OCI-LY7 (cell line): ENCODE measurements at regions of chr13 and their contacts with region 1.

Region 1: GRCh38 chr13:92379371-92379770 is 847.2 kb upstream of the GPC6 start:
- DNase-seq: no peak
- H3K4me3 ChIP-seq: no peak overlapping the region
- H3K27ac ChIP-seq: no peak overlapping the region
- H3K4me1 ChIP-seq: no peaks in the 10 kb centered on the region
- CTCF ChIP-seq: no peak

Region 2: DNA sequence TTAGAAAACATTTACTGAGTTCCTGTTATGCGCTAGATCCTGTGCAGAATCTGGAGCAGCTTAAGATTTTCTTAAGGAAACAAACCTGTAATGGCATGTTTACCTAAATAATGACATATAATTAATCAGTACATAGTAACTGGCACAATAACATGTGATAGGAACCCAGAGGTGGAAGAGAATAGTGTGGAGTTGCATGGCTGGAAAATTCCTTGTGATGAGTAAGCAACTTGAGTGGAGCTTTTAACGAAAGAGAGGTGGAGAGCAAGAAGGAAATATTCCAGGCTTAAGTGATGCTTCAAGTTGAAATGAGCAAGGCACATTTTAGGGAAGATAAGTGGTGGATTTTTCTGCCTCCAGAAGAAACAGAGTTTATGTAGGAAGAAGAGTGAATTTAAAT is 990.2 kb before region 1 on chr13:
- CTCF ChIA-PET with region 1: no interaction called
- POLR2A ChIA-PET with region 1: no interaction called
- intact Hi-C with region 1: no loop called
- DNase-seq: no peak
- H3K4me3 ChIP-seq: no peak overlapping the region
- H3K27ac ChIP-seq: no peak overlapping the region
- H3K4me1 ChIP-seq: no peaks in the 10 kb centered on the region
- CTCF ChIP-seq: no peak

Region 3: DNA sequence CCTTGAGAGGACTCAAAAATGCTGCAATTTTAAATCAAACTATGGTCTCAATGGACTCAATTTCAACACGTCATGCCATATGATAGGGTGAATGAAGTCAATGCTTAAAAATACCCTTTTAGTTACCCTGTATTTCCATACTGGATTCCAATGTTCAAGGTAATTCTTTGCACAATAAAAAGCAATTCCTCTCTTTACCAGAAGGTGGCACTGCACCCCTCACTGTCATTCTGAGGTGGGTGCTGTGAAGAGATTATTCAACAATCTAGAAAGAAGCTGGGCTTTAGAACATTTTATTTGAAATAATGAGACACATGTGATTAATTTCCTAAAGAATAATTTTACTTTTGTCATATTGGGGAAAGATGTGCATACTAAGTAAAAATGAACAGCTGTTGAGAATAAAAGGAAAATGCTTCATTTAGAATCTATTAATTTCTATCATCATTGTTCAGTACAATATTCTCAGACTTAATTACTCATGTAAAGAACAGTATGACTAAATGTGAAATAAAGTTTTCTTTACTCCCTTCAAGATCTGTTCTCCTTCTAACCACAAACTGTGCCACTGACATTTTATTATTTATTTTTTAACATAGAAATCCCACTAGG is 191.9 kb before region 1 on chr13:
- CTCF ChIA-PET with region 1: no interaction called
- POLR2A ChIA-PET with region 1: no interaction called
- intact Hi-C with region 1: no loop called
- DNase-seq: peak; percentile 84
- H3K4me3 ChIP-seq: no peak overlapping the region
- H3K27ac ChIP-seq: no peak overlapping the region
- H3K4me1 ChIP-seq: no peaks in the 10 kb centered on the region
- CTCF ChIP-seq: no peak

Region 4: GRCh38 chr13:92362717-92363116 is 16.7 kb before region 1 on chr13:
- CTCF ChIA-PET with region 1: no interaction called
- POLR2A ChIA-PET with region 1: interaction called, 48 read pairs
- intact Hi-C with region 1: no loop called
- DNase-seq: no peak
- H3K4me3 ChIP-seq: no peak overlapping the region
- H3K27ac ChIP-seq: no peak overlapping the region
- H3K4me1 ChIP-seq: no peaks in the 10 kb centered on the region
- CTCF ChIP-seq: no peak

Region 5: DNA sequence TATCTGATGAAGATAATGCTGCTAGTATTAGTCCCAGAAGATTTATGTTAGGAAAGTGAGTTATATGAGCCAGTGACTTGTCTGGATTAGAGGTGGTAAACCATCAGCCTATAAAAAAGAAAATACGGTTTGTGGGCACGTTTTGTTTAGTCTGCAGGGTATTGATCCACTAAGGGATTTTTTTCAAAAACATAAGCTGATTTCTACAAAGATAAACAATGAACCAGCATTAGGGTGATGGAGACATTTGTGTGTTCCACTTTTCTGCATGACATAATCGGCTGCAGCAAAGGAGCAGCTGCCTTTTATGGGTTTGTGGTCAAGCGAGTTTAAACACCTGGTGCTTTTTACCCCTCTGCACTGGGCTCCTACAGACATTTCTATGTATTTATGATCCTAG is 10.8 kb after region 1 on chr13:
- CTCF ChIA-PET with region 1: interaction called, 3 read pairs
- POLR2A ChIA-PET with region 1: interaction called, 16 read pairs
- intact Hi-C with region 1: no loop called
- DNase-seq: no peak
- H3K4me3 ChIP-seq: no peak overlapping the region
- H3K27ac ChIP-seq: no peak overlapping the region
- H3K4me1 ChIP-seq: no peaks in the 10 kb centered on the region
- CTCF ChIP-seq: no peak